ENCODE measurements at regions of chr12 and their contacts with region 1.

Region 1: GRCh38 chr12:66169221-66170170 is at the start of gene TMBIM4:
- DNase-seq: peak; percentile 72 to 92 (median 82)
- ATAC-seq: peak; percentile 79 to 82
- H3K4me3 Mint-ChIP-seq: peak within 1 kb of the TSS; percentile 93 to 98 (median 96)
- H3K27ac Mint-ChIP-seq: peak within 1 kb of the TSS; percentile 94 to 99 (median 98)
- H3K4me1 Mint-ChIP-seq: peaks cover 19 to 51% (median 45%) of the 10 kb centered on the region in 4 donors
- H3K27me3 Mint-ChIP-seq: peaks cover 0 to 2% (median 0%) of the 10 kb centered on the region in 5 donors
- polyA plus RNA-seq, gene TMBIM4: 241 to 335 (median 328) TPM

Region 2: DNA sequence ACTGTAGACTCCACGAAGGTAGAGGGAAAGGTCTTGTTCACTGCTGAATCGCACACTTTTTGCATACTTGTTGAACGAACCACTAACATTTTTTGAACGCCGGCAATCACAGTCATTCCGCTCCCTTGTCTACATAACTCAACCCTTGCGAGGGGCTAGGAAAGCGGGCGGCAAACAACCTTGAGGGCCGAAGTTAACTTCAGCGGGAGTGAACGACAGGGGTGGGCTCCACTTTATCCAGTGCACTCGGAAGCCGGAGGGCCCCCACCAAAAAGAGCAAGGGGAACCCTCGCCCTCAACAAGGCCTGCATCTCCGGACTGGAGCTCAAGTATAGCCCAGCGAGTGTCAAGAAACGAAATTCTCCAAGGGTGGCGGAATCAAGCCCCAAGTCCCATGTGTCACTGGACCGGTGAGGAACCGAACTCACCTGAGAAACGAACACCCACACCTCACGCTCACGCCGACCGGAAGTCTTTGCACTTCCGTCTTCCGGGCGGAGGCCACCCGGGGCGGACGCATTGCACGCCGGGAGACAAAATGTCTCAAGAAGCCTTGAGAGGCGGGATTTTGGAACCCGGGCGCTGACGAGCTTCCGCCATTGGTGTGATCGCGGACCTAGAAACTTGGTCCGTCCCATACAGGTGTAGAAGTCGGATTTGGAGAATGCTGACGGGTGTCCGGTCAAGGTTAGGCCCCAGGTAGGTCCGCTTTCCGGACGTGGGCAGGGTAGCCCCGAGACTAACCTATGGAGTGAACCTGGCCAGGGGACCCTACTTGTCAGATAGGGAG is 39.0 kb before region 1 on chr12 and contains the start of gene LLPH:
- POLR2A ChIA-PET with region 1: interaction called, 59 read pairs
- DNase-seq: peak; percentile 74 to 93 (median 86)
- ATAC-seq: peak; percentile 92 to 94
- H3K4me3 Mint-ChIP-seq: peak within 1 kb of the TSS; percentile 82 to 98 (median 97)
- H3K27ac Mint-ChIP-seq: peak within 1 kb of the TSS; percentile 92 to 99 (median 98)
- H3K4me1 Mint-ChIP-seq: peaks cover 26 to 67% (median 61%) of the 10 kb centered on the region in 4 donors
- H3K27me3 Mint-ChIP-seq: no peaks in the 10 kb centered on the region
- polyA plus RNA-seq, gene LLPH: 29.3 to 38.8 (median 31.2) TPM

Region 3: DNA sequence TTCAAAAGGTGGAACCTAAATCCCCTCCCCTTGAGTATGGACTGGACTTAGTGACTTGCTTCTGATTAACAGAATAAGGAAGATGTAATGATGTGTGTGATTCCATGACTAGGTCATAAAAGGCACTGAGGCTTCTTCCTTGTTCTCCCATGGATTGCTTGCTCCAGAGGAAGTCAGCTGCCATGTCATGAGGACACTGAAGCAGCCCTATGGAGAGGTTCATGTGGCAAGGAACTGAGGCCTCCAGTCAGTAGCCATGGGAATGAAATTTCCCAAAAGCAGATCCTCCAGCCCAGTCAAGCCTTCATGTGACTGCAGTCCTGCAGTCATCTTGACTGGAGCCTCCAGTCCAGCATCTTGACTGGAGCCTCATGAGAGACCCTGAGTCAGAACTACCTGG is 10.4 kb before region 1 on chr12:
- POLR2A ChIA-PET with region 1: interaction called, 11 read pairs
- DNase-seq: no peak
- ATAC-seq: no peak
- H3K4me3 Mint-ChIP-seq: no peak overlapping the region
- H3K27ac Mint-ChIP-seq: peak overlapping the region in 1 of 10 donors; percentile 13
- H3K4me1 Mint-ChIP-seq: peaks cover 38 to 77% (median 72%) of the 10 kb centered on the region in 4 donors
- H3K27me3 Mint-ChIP-seq: no peaks in the 10 kb centered on the region